Heart right ventricle (tissue), 16 donors: ENCODE measurements at regions of chr13 and their contacts with region 1.

Region 1: DNA sequence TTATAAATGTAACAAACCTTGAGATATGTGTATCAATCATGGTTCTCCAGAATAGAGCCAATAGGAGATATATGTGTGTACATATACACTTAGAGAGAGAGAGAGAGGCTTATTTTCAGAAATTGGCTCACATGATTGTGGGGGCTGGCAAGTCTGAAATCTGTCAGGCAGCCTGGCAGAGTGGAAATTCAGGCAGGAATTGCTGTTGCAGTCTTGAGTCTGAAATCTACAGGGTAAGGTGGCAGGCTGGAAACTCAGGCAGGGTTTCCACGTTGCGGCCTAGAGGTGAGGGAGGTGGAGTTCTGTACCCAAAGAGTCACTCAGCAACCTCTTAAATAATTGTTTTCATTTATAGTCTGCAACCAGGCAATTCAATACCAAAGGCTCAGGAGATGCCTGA is 218.4 kb downstream of the B3GLCT start:
- DNase-seq: no peak
- ATAC-seq: no peak
- H3K4me3 ChIP-seq: no peak overlapping the region
- H3K27ac ChIP-seq: no peak overlapping the region
- H3K4me1 ChIP-seq: peaks cover 0 to 4% (median 0%) of the 10 kb centered on the region in 9 donors
- H3K27me3 ChIP-seq: peaks cover 0 to 4% (median 0%) of the 10 kb centered on the region in 7 donors
- CTCF ChIP-seq: no peak

Region 2: DNA sequence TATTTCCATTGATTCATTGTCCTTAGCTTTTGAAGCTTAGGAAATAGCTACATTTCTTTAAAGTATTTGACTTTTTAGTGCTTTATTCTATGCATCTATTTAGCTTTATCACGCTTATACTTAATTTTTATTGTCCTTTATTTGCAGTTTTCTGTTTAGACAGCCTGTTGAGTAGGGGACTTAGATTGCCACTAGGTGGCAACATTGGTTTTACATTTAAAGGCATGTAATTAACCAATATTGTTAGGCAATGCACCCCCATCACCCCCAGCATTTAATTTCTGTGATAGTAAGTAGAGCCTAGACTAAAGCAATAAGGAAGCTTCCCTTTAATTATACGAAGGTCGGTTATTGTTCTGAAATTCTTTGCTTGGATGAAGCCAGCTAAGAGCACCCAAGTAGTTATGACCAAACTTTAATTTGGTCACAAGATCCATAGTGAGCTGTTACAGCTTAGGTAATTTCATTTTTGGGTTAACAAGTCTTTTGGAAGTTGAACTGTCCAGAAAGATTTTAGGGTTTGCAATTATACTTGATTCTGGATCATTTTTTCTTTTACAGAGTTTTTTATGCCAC is 181.9 kb before region 1 on chr13:
- intact Hi-C with region 1: loop called in 3 of 10 experiments (anchors 2 to 5 kb)
- DNase-seq: no peak
- ATAC-seq: peak in 4 of 8 donors; percentile 53 to 63 (median 58)
- H3K4me3 ChIP-seq: no peak overlapping the region
- H3K27ac ChIP-seq: no peak overlapping the region
- H3K4me1 ChIP-seq: no peaks in the 10 kb centered on the region
- H3K27me3 ChIP-seq: no peaks in the 10 kb centered on the region
- CTCF ChIP-seq: peak; percentile 47 to 77 (median 70)

Region 3: GRCh38 chr13:31346891-31347290 is 71.3 kb before region 1 on chr13:
- intact Hi-C with region 1: no loop called
- DNase-seq: no peak
- ATAC-seq: no peak
- H3K4me3 ChIP-seq: no peak overlapping the region
- H3K27ac ChIP-seq: no peak overlapping the region
- H3K4me1 ChIP-seq: no peaks in the 10 kb centered on the region
- H3K27me3 ChIP-seq: peaks cover 0 to 3% (median 0%) of the 10 kb centered on the region in 7 donors
- CTCF ChIP-seq: no peak